Heart right ventricle (tissue), 16 donors: ENCODE measurements at regions of chr1 and their contacts with region 1.

Region 1: DNA sequence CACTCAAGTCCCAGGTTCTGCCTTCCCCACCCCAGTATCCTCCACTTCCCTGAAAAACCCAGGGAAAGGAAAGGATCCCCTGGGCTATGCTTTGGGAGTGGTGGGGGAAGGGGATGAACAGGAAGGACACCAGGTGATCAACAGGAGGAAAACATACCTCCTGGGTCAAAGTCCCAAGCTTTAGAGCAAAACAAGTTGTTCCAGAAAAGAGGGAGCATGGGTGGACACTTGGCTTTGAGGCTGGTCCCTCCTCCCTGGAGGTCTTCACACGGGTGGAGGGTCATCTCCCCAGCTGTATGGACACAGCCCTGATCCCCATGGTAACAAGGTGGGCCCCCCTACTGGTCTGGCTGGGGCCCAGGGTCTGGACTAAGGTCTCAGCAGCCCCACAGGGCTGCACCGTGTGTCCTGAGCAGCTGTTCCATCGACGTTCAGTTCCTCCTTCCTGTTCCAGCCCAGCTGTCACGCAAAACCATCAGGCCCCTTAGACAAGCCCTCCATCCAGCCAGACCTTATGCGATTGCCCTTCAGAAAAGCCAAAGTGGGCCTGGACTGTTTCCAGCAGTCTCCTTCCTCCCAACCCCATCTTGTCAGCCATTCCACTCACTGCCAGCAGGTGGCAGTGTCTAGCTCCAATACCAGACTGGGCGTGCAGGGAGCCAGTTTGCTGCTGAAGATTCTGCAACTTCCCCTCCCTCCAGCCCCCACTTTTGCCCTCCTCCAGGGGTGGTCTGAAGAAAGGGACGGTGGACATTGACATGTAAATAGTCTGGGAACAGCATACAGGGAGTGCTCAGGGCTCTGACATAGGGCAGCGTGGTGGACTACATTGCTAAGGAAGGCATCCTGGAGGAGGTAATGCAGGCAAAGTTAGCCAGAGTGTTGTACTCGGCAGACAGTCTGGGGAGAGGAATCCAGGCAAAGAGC is 2.9 kb upstream of the PDZK1IP1 start:
- DNase-seq: peak; percentile 77 to 79
- ATAC-seq: peak; percentile 53 to 82 (median 66)
- H3K4me3 ChIP-seq: no peak overlapping the region
- H3K27ac ChIP-seq: no peak overlapping the region
- H3K4me1 ChIP-seq: peaks cover 2 to 35% (median 21%) of the 10 kb centered on the region in 9 donors
- H3K27me3 ChIP-seq: peaks cover 0 to 24% (median 0%) of the 10 kb centered on the region in 7 donors
- CTCF ChIP-seq: peak; percentile 92 to 97 (median 95)

Region 2: DNA sequence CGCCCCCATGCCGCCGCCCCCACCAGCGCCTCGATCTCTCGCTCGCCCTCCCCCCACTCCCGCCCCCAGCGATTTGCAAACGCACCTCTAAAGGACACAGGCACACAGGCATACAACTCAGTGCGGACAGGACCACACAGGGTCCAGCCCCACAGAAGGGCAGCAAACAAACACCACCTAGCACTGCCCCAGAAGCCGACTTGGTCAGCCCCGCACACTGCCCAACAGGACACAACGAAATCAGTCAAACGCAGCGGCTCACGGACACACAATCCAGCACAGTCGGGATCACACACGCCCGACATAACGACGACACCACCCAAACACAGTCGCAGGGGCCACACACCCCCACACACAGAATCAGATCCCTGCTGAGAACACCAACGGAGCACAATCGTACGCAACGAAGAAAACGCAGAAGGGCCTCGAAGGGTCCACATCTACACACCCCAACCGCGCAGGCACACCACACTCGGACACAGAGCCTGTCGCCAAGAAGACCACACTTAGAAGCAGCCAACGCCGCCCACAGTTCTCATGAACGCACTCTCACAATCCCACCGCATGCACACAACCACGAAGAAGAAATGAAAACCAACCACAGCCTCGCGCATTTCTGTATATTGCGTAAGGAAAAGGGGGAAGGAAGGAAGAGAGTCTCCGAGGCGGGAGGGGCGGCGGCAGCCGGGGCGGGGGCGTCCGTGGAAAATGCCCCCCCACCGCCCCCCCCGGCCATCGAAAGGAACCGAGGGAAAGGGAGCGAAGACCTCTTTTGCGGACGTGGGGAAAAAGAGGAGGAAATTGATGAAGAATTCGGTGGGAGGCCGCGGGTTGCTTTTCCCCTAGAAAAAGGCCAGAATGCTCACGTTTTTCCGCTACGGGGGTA is 38.8 kb after region 1 on chr1:
- intact Hi-C with region 1: loop called in 1 of 10 experiments (anchors 2 kb)
- DNase-seq: peak; percentile 30 to 57
- ATAC-seq: peak; percentile 16 to 73 (median 51)
- H3K4me3 ChIP-seq: peak overlapping the region; percentile 38 to 72 (median 58)
- H3K27ac ChIP-seq: peak overlapping the region; percentile 70 to 95 (median 89)
- H3K4me1 ChIP-seq: peaks cover 6 to 56% (median 30%) of the 10 kb centered on the region in 9 donors
- H3K27me3 ChIP-seq: peaks cover 32 to 95% (median 81%) of the 10 kb centered on the region in 7 donors
- CTCF ChIP-seq: no peak

Region 3: GRCh38 chr1:47313915-47314664 is 121.4 kb after region 1 on chr1 and contains the start of gene STIL:
- intact Hi-C with region 1: loop called in 1 of 10 experiments (anchors 5 kb)
- DNase-seq: peak; percentile 98
- ATAC-seq: peak; percentile 100
- H3K4me3 ChIP-seq: peak within 1 kb of the TSS; percentile 47 to 92 (median 70)
- H3K27ac ChIP-seq: peak within 1 kb of the TSS; percentile 37 to 91 (median 75)
- H3K4me1 ChIP-seq: peaks cover 0 to 14% (median 7%) of the 10 kb centered on the region in 9 donors
- H3K27me3 ChIP-seq: no peaks in the 10 kb centered on the region
- CTCF ChIP-seq: peak in 3 of 9 donors; percentile 10 to 30 (median 17)
- total RNA-seq, gene STIL: 0.44 to 2.1 (median 0.71) TPM

Region 4: GRCh38 chr1:47409311-47410070 is 216.8 kb after region 1 on chr1:
- intact Hi-C with region 1: loop called in 1 of 10 experiments (anchors 10 kb)
- DNase-seq: peak in 1 of 2 donors; percentile 18
- ATAC-seq: peak in 7 of 8 donors; percentile 42 to 65 (median 56)
- H3K4me3 ChIP-seq: no peak overlapping the region
- H3K27ac ChIP-seq: no peak overlapping the region
- H3K4me1 ChIP-seq: peaks cover 0 to 8% (median 3%) of the 10 kb centered on the region in 9 donors
- H3K27me3 ChIP-seq: peaks cover 0 to 30% (median 18%) of the 10 kb centered on the region in 7 donors
- CTCF ChIP-seq: no peak

Region 5: DNA sequence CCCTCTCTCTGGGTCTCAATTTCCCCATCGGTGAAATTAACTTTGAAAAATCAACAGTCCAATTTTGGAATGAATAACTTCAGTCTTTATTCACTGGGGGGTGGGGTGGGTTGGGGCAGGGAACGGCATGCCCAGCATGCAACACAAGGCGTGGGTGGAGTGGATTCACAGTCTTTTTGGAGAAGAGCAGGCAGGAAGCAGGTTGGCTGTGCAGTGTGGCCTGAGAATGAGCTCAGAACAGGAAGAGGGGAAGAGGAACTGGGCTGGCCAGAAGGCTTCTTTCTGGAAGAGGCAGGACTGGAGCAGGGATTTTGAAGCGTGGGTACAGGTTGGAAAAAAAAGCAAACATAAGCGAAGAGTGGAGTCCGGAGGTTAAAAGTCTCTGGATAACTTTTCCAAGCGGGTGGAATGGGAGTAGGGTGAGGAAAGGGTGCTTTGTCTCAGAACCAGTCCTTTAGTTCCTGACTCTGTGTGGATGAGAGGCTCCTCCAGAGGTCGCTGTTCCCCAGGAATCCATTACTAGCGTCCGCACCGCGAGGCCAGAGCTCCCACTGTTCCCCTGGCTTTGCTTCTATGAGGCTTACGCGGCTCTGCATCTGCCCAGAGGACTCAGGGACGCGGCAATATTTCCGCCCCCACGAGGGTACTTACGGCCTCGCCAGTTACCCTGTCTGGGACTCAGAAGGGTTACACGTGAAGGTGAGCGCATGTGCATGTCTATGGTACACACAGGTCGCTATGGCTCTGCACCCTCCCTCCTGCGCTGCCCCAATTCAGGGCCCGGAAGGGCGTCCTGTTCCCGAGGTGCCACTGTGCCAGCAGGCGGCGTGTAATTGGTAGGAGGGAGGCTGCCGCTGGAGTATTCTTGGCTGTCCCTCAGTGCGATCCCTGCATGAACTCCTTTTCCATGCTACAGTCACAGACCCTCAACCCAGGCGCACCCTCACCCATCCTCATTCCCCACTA is 239.6 kb after region 1 on chr1:
- intact Hi-C with region 1: loop called in 2 of 10 experiments (anchors 5 to 10 kb)
- DNase-seq: peak; percentile 58 to 78
- ATAC-seq: peak; percentile 57 to 85 (median 82)
- H3K4me3 ChIP-seq: peak overlapping the region in 4 of 10 donors; percentile 16 to 26 (median 20)
- H3K27ac ChIP-seq: peak overlapping the region in 1 of 10 donors; percentile 44
- H3K4me1 ChIP-seq: peaks cover 10 to 50% (median 40%) of the 10 kb centered on the region in 9 donors
- H3K27me3 ChIP-seq: peaks cover 18 to 100% (median 92%) of the 10 kb centered on the region in 7 donors
- CTCF ChIP-seq: peak; percentile 20 to 88 (median 77)

Region 6: GRCh38 chr1:47725992-47726855 is 533.5 kb after region 1 on chr1:
- intact Hi-C with region 1: loop called in 5 of 10 experiments (anchors 5 to 10 kb)
- DNase-seq: peak; percentile 74 to 78
- ATAC-seq: peak; percentile 81 to 95 (median 90)
- H3K4me3 ChIP-seq: peak overlapping the region in 5 of 10 donors; percentile 10 to 33 (median 22)
- H3K27ac ChIP-seq: no peak overlapping the region
- H3K4me1 ChIP-seq: peaks cover 0 to 20% (median 16%) of the 10 kb centered on the region in 9 donors
- H3K27me3 ChIP-seq: peaks cover 5 to 63% (median 53%) of the 10 kb centered on the region in 7 donors
- CTCF ChIP-seq: peak; percentile 63 to 95 (median 90)